Activated naive CD4-positive, alpha-beta T cell treated with anti-CD3 and anti-CD28 coated beads for 36 hours (primary cell): ENCODE measurements at regions of chr4 and their contacts with region 1.

Region 1: DNA sequence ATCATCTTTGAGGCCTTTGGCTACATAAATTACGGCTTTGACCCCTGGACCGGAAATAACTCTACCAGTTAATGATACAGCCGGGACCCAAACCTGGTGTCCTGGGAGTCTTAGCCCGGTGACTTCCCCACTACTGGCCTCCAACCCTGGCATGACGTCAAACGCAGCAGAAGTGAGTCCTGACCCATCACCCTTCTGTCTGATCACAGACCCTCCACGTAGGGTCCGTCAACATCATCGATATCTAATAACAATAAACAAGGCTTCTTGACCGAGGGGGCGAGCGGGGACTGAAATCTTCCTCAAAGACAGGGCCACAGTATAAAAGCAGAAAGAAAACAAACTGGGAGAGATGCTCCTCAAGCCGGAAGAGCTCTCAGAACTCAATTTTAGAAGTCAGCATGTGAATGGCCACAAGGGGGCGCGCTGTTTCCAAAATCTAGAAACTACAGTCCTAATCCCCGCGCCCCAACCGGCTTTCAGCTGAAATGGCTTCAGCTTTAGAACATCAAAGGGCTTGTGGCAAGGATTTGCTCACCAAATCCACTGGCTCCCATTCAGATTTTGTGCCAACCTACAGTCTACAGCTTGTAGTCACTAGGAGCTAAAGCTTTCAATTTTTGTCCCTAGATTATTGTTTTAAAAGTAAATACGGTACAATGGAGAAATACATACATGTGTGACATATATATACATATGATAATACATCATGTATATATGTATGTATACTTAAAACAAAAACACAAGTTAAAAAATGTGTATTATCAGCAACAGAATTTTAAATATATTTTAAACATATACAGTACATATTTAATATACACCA is 46.4 kb upstream of the ENPP6 start:
- DNase-seq: peak; percentile 99
- H3K4me3 Mint-ChIP-seq: no peak overlapping the region
- H3K27ac Mint-ChIP-seq: no peak overlapping the region
- H3K4me1 Mint-ChIP-seq: peaks cover 47% of the 10 kb centered on the region
- H3K27me3 Mint-ChIP-seq: no peaks in the 10 kb centered on the region

Region 2: DNA sequence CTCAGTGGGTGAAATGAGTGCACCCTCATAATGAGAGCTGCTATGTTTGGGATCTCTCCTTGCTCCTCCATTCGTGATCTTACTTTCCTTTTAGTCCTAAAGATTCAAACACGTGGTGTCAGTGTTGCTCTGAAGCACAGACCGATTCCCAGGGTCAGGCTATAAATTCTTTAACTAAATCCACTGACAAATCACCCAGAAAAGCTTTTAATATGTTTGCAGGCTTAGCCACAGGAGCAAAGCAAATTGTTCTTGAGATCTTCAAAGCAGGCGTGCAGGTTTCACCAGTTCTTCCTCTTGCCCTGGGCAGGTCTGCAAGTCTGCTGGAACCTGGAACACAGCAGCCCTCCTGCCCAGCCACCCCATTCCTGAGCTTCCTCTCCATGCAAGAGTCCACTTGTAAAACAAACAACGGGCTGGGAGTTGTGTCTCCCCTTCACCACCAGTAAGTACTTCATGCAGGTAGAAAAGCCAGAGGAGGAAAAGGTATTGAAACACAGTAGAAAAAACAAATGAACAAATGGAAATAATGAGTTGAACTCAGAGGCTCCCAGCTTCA is 23.7 kb after region 1 on chr4:
- CTCF ChIA-PET with region 1: interaction called, 131 read pairs
- intact Hi-C with region 1: loop called (anchors 1 kb)
- DNase-seq: no peak
- H3K4me3 Mint-ChIP-seq: no peak overlapping the region
- H3K27ac Mint-ChIP-seq: no peak overlapping the region
- H3K4me1 Mint-ChIP-seq: peaks cover 52% of the 10 kb centered on the region
- H3K27me3 Mint-ChIP-seq: peaks cover 4% of the 10 kb centered on the region

Region 3: DNA sequence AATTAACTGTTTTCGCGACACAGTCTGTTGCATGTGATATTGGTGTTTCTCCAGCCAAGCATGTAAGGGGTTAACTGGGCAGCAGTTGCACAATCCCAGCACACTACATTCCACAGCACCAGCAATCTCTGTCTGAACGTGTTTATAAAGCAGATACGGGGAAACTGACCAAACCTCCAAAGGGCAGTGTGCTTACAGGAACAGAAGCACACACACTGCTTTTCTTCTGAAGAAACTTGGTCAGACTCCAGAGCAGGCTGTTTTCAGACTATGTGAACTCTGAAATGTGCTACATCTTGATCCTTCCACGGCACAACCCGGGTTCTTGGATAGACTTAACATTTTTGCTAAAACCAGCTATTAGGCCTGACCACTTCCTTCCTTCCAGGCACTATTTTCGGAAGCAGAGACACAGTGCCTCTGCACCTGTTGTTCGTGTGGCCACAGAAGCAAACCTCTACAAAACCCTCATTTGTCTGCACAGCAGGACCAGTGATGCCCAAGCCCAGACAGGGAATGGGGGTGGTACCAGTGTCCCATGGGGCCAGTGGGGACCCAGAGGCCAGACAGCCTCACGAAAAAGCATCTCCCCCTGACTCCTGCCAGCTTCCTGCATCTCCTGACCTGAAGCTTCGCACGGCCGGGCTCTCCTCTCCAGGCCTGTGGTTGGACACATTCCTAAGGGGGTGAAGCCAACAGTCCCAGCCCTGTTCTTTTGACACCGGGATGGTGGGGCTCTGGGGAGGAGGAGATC is 120.1 kb after region 1 on chr4:
- CTCF ChIA-PET with region 1: interaction called, 6 read pairs
- intact Hi-C with region 1: loop called (anchors 1 kb)
- DNase-seq: peak; percentile 38
- H3K4me3 Mint-ChIP-seq: no peak overlapping the region
- H3K27ac Mint-ChIP-seq: no peak overlapping the region
- H3K4me1 Mint-ChIP-seq: peaks cover 61% of the 10 kb centered on the region
- H3K27me3 Mint-ChIP-seq: no peaks in the 10 kb centered on the region

Region 4: GRCh38 chr4:184506527-184507121 is 242.5 kb after region 1 on chr4:
- CTCF ChIA-PET with region 1: interaction called, 14 read pairs
- intact Hi-C with region 1: no loop called
- DNase-seq: peak; percentile 66
- H3K4me3 Mint-ChIP-seq: no peak overlapping the region
- H3K27ac Mint-ChIP-seq: no peak overlapping the region
- H3K4me1 Mint-ChIP-seq: peaks cover 33% of the 10 kb centered on the region
- H3K27me3 Mint-ChIP-seq: no peaks in the 10 kb centered on the region

Region 5: DNA sequence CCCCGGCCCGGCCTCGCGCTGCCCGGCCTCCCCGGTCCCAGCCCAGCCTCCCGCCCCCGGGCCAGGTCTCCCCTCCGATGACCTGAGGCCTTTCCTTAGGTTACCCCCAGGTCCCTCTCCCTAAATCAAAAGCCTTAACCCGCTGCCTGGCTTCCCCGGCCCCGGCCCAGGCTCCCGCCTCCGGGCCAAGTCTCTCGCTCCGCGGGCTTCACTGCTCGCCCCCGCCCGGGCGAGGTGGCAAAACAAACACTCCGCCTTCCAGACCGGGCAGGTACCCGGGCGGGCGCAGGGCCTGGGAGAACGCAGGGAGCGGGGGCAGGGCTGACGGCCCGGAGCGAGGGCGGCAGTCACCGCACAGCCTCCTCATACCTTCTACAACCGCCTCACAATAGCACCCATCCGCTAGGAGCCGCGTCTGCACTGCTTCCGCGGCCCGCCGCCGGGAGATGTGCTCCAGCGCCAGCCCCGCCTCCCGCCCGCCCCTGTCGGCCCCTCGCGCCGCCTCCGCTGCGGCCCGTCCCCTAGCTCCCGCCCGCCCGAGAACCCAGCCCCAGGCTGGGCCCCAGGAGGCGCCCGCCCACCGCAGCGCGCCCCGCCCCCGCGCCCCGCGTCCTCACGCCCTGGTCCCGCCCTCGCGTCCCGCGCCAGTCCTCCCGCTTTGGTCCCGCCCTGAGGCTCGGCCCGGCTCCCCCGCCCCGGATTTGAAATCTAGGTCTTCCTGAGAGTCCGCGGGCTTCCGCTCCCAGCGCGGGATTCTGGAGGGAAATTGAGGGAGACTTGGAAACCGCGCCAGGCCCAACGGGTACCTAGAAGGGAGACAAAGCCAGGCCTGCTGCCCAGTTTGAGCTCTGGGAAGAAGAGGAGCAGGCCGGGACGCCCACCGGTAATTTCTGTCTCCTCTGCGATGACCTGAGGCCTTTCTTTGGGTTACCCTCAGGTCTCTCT is 385.2 kb after region 1 on chr4 and contains the starts of genes CASP3 and PRIMPOL:
- CTCF ChIA-PET with region 1: interaction called, 7 read pairs
- intact Hi-C with region 1: loop called (anchors 1 kb)
- DNase-seq: peak; percentile 97
- H3K4me3 Mint-ChIP-seq: peak within 1 kb of the TSS; percentile 93
- H3K27ac Mint-ChIP-seq: peak within 1 kb of the TSS; percentile 90
- H3K4me1 Mint-ChIP-seq: peaks cover 50% of the 10 kb centered on the region
- H3K27me3 Mint-ChIP-seq: no peaks in the 10 kb centered on the region
- total RNA-seq, gene CASP3: 27.5 to 27.9 TPM
- total RNA-seq, gene PRIMPOL: 17.9 to 18.1 TPM

Region 6: GRCh38 chr4:184825896-184826690 is 562.0 kb after region 1 on chr4 and contains the start of gene ACSL1:
- CTCF ChIA-PET with region 1: no interaction called
- intact Hi-C with region 1: loop called (anchors 5 kb)
- DNase-seq: peak; percentile 76
- H3K4me3 Mint-ChIP-seq: peak within 1 kb of the TSS; percentile 84
- H3K27ac Mint-ChIP-seq: peak within 1 kb of the TSS; percentile 57
- H3K4me1 Mint-ChIP-seq: peaks cover 31% of the 10 kb centered on the region
- H3K27me3 Mint-ChIP-seq: no peaks in the 10 kb centered on the region
- total RNA-seq, gene ACSL1: 29.8 to 31.9 TPM